ENCODE measurements at regions of chr16 and their contacts with region 1.

Region 1: GRCh38 chr16:10971560-10971961 is 27.2 kb downstream of the CLEC16A start:
- DNase-seq: peak; percentile 46
- ATAC-seq: peak; percentile 90
- H3K4me3 Mint-ChIP-seq: no peak overlapping the region
- H3K27ac Mint-ChIP-seq: no peak overlapping the region
- H3K4me1 Mint-ChIP-seq: peaks cover 5% of the 10 kb centered on the region
- H3K27me3 Mint-ChIP-seq: no peaks in the 10 kb centered on the region
- CTCF ChIP-seq: peak; percentile 43

Region 2: GRCh38 chr16:10918294-10919002 is 53.1 kb before region 1 on chr16:
- CTCF ChIA-PET with region 1: no interaction called
- POLR2A ChIA-PET with region 1: no interaction called
- DNase-seq: peak; percentile 97
- ATAC-seq: peak; percentile 89
- H3K4me3 Mint-ChIP-seq: peak overlapping the region; percentile 18; the same call in 1 of the 2 replicates
- H3K27ac Mint-ChIP-seq: no peak overlapping the region
- H3K4me1 Mint-ChIP-seq: peaks cover 5% of the 10 kb centered on the region; the same call in 1 of the 2 replicates
- H3K27me3 Mint-ChIP-seq: no peaks in the 10 kb centered on the region
- CTCF ChIP-seq: peak; percentile 87

Region 3: DNA sequence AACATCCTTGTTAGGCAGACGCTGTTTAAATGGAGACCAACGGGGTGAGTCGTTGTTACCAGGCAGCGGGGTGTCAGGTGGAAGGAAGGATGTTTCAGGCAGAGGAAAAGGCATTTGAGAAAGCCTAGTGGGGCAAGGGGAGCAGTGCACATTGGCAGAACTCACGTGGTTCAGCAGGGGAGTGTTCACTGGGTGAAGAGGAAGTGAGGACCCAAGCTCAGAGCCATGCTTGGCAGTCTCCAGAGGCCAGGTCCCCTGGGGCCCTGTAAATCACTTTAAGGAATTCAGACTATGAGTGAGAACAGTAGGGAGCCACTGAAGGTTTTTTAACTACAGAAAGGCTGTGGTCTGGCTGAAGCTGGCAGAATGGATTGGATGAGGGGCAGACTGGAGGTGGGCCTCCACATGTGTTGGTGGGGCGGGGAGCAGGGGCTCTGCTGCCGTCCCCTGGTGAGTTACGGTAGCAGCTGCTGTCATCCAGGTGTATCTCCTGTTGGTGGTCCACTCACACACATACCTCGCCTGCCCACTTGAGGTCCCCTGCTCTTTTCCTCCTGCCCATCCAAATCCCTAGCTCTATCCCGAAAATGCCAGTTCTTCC is 22.1 kb before region 1 on chr16:
- CTCF ChIA-PET with region 1: interaction called, 70 read pairs
- POLR2A ChIA-PET with region 1: no interaction called
- DNase-seq: peak; percentile 59
- ATAC-seq: peak; percentile 75
- H3K4me3 Mint-ChIP-seq: no peak overlapping the region
- H3K27ac Mint-ChIP-seq: peak overlapping the region; percentile 18
- H3K4me1 Mint-ChIP-seq: peaks cover 61% of the 10 kb centered on the region
- H3K27me3 Mint-ChIP-seq: no peaks in the 10 kb centered on the region
- CTCF ChIP-seq: no peak

Region 4: DNA sequence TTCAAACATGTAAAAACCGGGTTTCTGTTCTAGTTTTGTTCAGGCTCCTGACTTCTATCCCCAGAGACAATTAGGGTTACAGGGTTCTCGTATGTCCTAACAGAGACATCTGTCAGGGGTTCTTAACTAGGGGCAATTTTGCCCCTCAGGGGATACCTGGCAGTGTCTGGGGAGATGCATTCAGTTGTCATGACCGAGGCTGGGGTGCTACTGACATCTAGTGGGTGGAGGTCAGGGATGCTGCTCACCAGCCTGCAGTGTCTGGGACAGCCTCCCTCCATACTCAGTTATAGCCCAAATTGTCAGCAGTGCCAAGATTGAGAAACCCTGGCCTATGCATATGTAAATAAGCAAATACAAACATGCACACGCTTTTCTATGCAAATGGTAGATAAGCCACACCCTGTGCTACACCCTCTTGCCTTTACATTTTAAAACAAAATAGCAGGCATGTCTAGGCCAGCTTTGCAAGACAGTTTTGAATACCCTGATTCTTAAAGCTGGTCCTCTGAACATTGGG is 10.2 kb after region 1 on chr16:
- CTCF ChIA-PET with region 1: interaction called, 16 read pairs
- POLR2A ChIA-PET with region 1: no interaction called
- DNase-seq: peak; percentile 73
- ATAC-seq: peak; percentile 97
- H3K4me3 Mint-ChIP-seq: no peak overlapping the region
- H3K27ac Mint-ChIP-seq: no peak overlapping the region
- H3K4me1 Mint-ChIP-seq: 0 out of 2 replicates have a peak, but pooled peaks cover 15% of the 10 kb centered on the region
- H3K27me3 Mint-ChIP-seq: no peaks in the 10 kb centered on the region
- CTCF ChIP-seq: 0 out of 2 replicates have a peak, but pooled peaks have one; percentile 15

Region 5: GRCh38 chr16:11004957-11005610 is 33.5 kb after region 1 on chr16:
- CTCF ChIA-PET with region 1: no interaction called
- POLR2A ChIA-PET with region 1: no interaction called
- DNase-seq: no peak
- ATAC-seq: no peak
- H3K4me3 Mint-ChIP-seq: no peak overlapping the region
- H3K27ac Mint-ChIP-seq: no peak overlapping the region
- H3K4me1 Mint-ChIP-seq: peaks cover 7% of the 10 kb centered on the region
- H3K27me3 Mint-ChIP-seq: no peaks in the 10 kb centered on the region
- CTCF ChIP-seq: no peak

Region 6: GRCh38 chr16:11386791-11387546 is 415.4 kb after region 1 on chr16:
- CTCF ChIA-PET with region 1: interaction called, 12 read pairs
- POLR2A ChIA-PET with region 1: no interaction called
- DNase-seq: peak; percentile 86
- ATAC-seq: peak; percentile 85
- H3K4me3 Mint-ChIP-seq: no peak overlapping the region
- H3K27ac Mint-ChIP-seq: no peak overlapping the region; the same call in 1 of the 2 replicates
- H3K4me1 Mint-ChIP-seq: peaks cover 31% of the 10 kb centered on the region
- H3K27me3 Mint-ChIP-seq: peaks cover 2% of the 10 kb centered on the region; the same call in 1 of the 2 replicates
- CTCF ChIP-seq: peak; percentile 59; the same call in 1 of the 2 replicates

Measured in WTC11 (cell line).